A673 (cell line): ENCODE measurements at regions of chr12 and their contacts with region 1.

Region 1: DNA sequence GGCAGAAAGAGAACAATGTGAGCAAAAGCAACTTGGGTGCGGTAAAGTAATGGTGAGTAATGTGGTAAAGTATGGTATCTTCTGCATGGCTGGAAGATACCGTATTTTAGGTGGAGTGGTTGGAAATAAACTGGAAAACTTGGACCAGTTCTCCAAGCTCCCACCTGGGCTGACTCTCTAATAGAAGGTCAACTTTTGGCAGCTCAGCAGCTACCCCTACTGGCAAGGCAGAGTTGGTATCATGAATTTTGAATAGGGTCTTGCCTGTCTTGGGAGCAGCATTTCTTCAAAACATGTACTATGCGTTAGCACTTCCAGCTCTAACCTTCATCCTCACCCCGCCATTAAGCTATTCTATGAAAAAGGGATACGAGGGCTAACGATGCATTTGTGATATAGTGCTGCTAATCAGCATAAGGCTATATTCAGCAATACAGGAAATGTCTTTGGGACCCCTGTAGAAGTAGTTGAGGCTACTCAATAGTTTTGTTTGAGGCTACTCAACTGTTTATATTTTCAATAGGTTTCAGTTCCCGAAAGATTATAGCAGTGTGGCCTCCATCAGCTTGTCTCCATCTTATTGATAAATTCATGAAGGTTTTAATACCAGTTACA is 276.3 kb upstream of the FAR2 start:
- DNase-seq: peak; percentile 68
- H3K4me3 ChIP-seq: no peak overlapping the region
- H3K27ac ChIP-seq: no peak overlapping the region
- H3K4me1 ChIP-seq: no peaks in the 10 kb centered on the region
- H3K27me3 ChIP-seq: peaks cover 29% of the 10 kb centered on the region
- CTCF ChIP-seq: peak; percentile 75

Region 2: DNA sequence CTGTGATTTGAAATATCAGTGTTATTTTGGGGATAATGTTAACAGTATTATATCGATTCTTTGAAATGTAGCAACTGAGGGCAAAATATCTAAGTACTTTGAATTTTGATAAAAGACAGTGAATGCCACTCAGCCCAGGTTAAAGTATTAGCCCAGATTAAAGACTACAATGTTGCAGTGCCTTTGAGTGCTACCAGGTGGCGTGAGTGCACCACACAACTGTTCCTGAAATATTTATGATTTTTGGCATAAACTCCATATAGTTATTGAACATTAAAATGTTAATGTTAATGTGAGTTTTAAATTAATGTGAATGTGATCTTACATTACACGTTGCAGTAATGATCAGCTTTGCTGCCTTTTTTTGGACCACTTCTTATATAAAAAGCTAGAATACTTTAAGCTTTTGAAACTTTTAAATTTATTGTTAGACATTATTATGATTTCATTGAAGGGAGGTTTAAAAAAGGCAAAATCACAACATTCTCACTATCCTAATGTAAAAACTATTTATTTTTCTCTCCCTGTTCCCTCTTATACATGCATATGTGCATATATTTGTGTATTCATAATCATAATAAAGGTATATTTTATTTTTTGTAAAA is 1139.6 kb before region 1 on chr12:
- CTCF ChIA-PET with region 1: interaction called, 5 read pairs
- POLR2A ChIA-PET with region 1: no interaction called
- intact Hi-C with region 1: loop called (anchors 5 kb)
- DNase-seq: peak; percentile 45
- H3K4me3 ChIP-seq: no peak overlapping the region
- H3K27ac ChIP-seq: no peak overlapping the region
- H3K4me1 ChIP-seq: no peaks in the 10 kb centered on the region
- H3K27me3 ChIP-seq: no peaks in the 10 kb centered on the region
- CTCF ChIP-seq: peak; percentile 86

Region 3: DNA sequence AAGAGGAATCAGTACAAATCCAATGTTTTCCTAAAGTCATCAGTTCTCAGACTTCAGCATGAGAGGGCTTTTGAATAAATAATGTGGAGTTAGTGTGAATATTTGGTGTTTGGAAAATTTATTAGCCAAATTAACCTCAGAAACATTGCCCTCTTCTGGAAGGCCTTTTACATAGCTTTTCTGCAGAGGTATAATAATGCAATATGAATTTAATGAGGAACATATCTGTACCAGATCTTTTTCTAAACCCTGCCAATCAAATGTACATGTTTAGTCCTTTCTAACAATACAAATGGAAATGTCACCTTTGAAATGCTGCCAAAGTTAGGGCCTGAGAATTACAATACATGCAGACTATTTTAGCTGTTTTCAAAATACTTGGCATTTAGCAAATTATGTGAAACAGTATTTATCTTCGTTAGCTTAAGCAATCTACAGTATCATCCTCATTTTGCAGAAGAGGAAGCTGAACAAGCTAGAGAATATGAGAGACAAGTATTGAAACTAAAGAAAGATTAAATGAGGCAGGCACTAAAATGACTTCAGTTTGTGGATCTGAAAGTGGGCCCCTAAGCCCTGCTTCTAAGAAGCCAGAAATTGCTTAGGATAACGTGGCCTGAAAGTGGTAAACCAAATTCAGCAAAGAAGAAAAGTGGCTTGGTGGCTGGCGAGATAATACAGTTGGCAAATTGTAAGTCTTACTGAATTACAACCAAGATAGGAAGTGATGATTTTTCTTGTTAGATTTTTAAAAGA is 1032.3 kb before region 1 on chr12:
- CTCF ChIA-PET with region 1: no interaction called
- POLR2A ChIA-PET with region 1: no interaction called
- intact Hi-C with region 1: loop called (anchors 10 kb)
- DNase-seq: no peak
- H3K4me3 ChIP-seq: no peak overlapping the region
- H3K27ac ChIP-seq: no peak overlapping the region
- H3K4me1 ChIP-seq: peaks cover 14% of the 10 kb centered on the region
- H3K27me3 ChIP-seq: no peaks in the 10 kb centered on the region
- CTCF ChIP-seq: peak; percentile 55

Region 4: GRCh38 chr12:27969624-27970400 is 902.9 kb before region 1 on chr12:
- CTCF ChIA-PET with region 1: no interaction called
- POLR2A ChIA-PET with region 1: no interaction called
- intact Hi-C with region 1: loop called (anchors 10 kb)
- DNase-seq: peak; percentile 81
- H3K4me3 ChIP-seq: peak overlapping the region; percentile 53
- H3K27ac ChIP-seq: no peak overlapping the region
- H3K4me1 ChIP-seq: peaks cover 39% of the 10 kb centered on the region
- H3K27me3 ChIP-seq: peaks cover 5% of the 10 kb centered on the region
- CTCF ChIP-seq: peak; percentile 39

Region 5: GRCh38 chr12:28172434-28173030 is 700.2 kb before region 1 on chr12:
- CTCF ChIA-PET with region 1: no interaction called
- POLR2A ChIA-PET with region 1: no interaction called
- intact Hi-C with region 1: loop called (anchors 5 kb)
- DNase-seq: peak; percentile 77
- H3K4me3 ChIP-seq: no peak overlapping the region
- H3K27ac ChIP-seq: no peak overlapping the region
- H3K4me1 ChIP-seq: no peaks in the 10 kb centered on the region
- H3K27me3 ChIP-seq: no peaks in the 10 kb centered on the region
- CTCF ChIP-seq: peak; percentile 79

Region 6: GRCh38 chr12:28759312-28759751 is 113.4 kb before region 1 on chr12:
- CTCF ChIA-PET with region 1: no interaction called
- POLR2A ChIA-PET with region 1: no interaction called
- intact Hi-C with region 1: no loop called
- DNase-seq: peak; percentile 1
- H3K4me3 ChIP-seq: no peak overlapping the region
- H3K27ac ChIP-seq: no peak overlapping the region
- H3K4me1 ChIP-seq: no peaks in the 10 kb centered on the region
- H3K27me3 ChIP-seq: no peaks in the 10 kb centered on the region
- CTCF ChIP-seq: no peak